Mucosa of descending colon (tissue), 3 donors: ENCODE measurements at regions of chr4 and their contacts with region 1.

Region 1: GRCh38 chr4:76430519-76431388 is 4.3 kb upstream of the SHROOM3 start:
- DNase-seq: peak in 1 of 3 donors; percentile 47
- ATAC-seq: peak; percentile 57
- H3K4me3 ChIP-seq: no peak overlapping the region
- H3K4me1 ChIP-seq: no peaks in the 10 kb centered on the region
- CTCF ChIP-seq: no peak

Region 2: DNA sequence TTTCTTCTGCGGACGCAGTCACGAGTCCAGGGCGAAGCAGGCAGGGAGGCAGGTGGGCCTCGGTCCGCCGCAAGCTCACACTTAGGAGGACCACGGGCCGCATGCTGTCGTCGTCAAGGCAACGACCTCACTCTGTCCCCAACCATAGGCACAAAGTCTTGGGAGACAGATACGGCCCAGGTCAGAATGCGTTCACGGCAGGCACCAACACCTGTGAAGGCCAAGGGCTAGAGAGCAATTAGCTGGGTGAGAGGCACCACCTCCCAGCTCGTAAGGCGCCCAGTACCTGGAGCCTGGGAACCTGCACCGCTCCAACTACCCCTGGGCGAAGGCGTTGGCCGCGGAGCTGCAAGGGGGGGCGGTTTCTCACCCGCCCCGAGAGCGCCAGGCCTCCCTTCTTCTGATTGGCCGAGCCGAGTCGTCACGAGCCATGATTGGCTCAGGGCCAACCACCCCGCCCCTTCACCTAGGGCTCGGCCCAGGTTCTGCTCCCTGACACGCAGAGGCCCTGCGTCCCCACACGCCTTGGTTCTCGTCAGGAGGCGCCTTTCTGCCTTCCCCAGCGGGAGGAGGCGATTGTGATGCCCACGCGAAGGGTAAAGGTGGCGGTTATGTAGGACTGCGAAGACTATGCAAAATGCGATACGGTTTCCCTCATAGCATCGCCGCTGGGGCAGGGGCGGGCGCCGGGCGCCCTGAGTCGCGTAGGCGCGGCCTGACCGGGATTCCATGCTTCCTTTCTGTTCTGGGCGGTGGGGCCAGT is 800.4 kb before region 1 on chr4 and contains the start of gene CDKL2:
- intact Hi-C with region 1: no loop called
- DNase-seq: peak; percentile 96 to 98 (median 97)
- ATAC-seq: peak; percentile 99
- H3K4me3 ChIP-seq: peak within 1 kb of the TSS; percentile 23
- H3K4me1 ChIP-seq: no peaks in the 10 kb centered on the region
- CTCF ChIP-seq: no peak
- total RNA-seq, gene CDKL2: 1.6 to 3.5 (median 2.3) TPM

Region 3: DNA sequence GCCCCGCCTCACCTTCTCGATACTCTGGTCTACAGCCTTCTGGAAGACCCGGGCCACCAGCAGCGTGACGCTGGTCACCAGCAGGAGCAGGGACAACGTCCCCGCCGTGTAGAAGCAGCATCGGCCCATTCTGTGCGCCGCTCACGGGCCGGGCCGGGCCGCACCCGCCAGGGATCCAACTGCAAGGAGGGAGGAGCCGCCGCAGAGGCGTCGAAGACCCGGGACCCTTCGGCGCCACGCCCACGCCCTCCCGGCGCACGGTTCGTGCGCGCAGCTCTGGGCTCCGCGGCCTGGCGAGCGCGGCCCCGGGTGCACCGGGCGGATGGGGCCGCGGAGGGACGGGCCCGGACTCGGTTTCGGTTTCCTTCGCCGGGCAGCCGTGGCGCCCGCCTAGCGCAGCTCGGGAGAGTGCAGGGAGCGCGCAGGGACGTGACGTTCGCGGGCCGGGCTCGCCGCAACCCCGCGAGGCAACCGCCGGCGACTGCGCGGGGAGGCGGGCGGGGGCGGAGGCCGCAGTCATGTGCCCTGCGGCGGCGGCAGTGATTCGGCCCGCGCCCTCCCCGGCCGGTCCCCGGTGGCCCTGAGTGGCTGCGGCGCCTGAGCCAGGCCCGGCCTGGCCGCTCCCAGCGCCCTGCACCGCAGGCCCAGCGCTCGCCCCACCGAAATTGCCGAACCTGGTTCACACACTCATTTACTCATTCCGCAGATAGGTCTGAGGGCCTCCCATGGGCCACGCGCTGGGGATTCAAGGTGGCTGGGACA is 217.2 kb before region 1 on chr4 and contains the start of gene SCARB2:
- intact Hi-C with region 1: no loop called
- DNase-seq: peak; percentile 85 to 93 (median 92)
- ATAC-seq: peak; percentile 90
- H3K4me3 ChIP-seq: peak within 1 kb of the TSS; percentile 56
- H3K4me1 ChIP-seq: peaks cover 72% of the 10 kb centered on the region
- CTCF ChIP-seq: no peak
- total RNA-seq, gene SCARB2: 148 to 183 (median 172) TPM

Region 4: DNA sequence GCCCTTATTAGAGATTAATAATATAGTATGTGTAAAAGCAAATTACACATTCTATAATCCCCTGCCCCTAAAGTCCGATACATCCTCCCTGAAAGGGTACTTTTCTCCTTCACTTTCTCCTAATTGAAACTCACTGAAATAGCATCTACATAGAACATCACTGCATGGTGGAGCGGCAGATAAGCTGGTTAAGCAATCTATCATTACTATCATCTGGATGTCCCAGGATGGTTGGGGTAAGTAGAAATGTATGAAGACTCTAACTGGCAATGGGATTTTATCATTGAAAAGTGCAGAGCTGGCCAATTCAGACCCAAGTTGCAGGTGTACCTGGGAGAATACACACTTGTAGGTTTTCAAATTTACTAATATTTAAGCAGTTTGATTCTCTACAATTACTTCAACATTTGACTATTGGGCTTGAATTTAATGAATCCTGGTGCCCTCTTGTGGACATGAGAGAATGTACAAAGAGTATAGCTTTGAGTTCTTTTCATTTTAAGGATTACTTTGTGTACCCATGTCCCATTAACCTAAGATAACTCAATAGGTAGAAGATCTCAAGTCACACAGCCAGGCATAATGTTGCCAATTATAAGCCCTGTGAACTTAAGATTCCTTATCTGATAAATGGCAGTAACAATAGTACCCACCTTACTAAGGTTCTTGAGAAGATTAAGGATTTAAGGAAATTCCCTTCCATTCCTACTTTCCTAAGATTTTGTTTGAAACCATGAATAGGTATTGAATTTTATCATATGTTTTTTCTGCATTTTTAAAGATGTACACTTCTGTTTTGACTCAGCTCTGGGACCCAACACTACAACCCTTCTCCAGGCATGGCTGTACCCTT is 74.1 kb after region 1 on chr4:
- intact Hi-C with region 1: loop called (anchors 2 to 5 kb)
- DNase-seq: peak in 1 of 3 donors; percentile 57
- ATAC-seq: peak; percentile 57
- H3K4me3 ChIP-seq: no peak overlapping the region
- H3K4me1 ChIP-seq: no peaks in the 10 kb centered on the region
- CTCF ChIP-seq: peak; percentile 12

Region 5: DNA sequence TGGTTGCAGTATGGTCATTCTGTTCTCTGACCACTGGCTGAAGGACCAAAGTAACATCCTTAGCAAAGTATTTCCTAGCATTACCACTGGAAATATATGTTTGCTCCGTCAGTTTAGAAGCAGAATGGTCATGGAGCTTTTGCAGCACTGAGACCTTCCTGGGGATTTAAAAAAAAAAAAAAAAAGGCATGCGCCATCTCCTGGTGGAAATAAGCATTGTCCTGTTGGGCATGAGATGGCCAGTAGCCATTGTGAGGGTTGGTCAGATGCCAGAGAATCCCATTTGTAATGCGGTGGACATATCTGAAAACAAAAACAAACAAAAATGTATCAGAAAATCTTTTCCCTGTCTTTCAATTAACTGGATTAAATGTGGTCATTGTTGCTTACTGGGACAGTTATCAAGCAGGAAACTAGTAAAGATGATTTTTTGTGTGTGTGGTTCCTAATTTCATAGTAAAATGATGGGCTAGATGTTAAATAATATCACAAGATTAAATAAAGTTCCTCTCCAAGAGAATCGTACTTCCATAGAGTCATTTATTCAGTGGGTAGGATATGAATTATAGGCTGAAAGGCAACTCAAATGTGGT is 327.6 kb after region 1 on chr4:
- intact Hi-C with region 1: loop called in 1 of 2 experiments (anchors 10 kb)
- DNase-seq: peak in 1 of 3 donors; percentile 53
- ATAC-seq: peak; percentile 72
- H3K4me3 ChIP-seq: no peak overlapping the region
- H3K4me1 ChIP-seq: no peaks in the 10 kb centered on the region
- CTCF ChIP-seq: peak; percentile 54